ENCODE measurements at regions of chr20 and their contacts with region 1.

Region 1: DNA sequence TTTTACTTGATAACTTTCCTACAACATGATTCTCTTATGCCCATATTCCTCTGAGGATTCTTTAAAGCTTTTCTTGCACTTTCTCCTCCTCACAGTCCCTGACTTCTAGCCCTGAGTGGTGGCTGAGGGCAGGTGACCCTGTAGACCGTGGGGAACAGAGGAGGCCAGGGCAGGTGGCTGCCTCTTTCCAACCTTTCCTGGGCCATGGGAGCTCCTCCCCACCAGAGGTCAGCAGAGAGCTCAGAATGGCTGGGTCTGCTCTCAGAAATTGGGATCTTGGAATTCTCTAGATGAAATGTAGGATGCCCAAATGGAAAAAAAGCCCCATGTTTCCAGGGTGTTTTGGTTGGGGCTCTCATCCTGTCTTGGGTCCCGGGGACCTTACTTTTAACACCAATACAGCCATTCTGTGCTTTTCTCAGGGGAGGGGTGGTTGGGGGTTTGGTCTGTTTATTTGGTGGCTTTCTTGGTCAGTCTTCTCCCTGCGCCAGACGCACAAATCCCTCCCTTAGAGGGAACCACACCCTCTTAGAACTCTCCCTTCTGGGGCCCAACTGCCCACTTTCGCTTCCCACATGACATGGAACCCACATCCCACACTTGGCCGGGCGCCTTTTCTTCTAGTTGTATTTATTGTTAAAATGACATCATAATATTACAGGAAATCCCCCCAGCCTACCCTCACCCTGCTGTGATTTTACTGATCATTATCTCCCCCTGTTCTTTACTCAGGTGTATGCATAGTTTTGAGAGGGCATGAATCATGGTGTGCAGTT is 17.9 kb downstream of the GNAS start:
- DNase-seq: peak; percentile 65
- H3K4me3 ChIP-seq: no peak overlapping the region
- H3K27ac ChIP-seq: no peak overlapping the region
- H3K4me1 ChIP-seq: peaks cover 16% of the 10 kb centered on the region
- CTCF ChIP-seq: peak; percentile 95

Region 2: GRCh38 chr20:58778760-58779159 is 91.7 kb before region 1 on chr20:
- CTCF ChIA-PET with region 1: no interaction called
- POLR2A ChIA-PET with region 1: no interaction called
- intact Hi-C with region 1: no loop called
- DNase-seq: no peak
- H3K4me3 ChIP-seq: no peak overlapping the region
- H3K27ac ChIP-seq: no peak overlapping the region
- H3K4me1 ChIP-seq: no peaks in the 10 kb centered on the region
- CTCF ChIP-seq: no peak

Region 3: DNA sequence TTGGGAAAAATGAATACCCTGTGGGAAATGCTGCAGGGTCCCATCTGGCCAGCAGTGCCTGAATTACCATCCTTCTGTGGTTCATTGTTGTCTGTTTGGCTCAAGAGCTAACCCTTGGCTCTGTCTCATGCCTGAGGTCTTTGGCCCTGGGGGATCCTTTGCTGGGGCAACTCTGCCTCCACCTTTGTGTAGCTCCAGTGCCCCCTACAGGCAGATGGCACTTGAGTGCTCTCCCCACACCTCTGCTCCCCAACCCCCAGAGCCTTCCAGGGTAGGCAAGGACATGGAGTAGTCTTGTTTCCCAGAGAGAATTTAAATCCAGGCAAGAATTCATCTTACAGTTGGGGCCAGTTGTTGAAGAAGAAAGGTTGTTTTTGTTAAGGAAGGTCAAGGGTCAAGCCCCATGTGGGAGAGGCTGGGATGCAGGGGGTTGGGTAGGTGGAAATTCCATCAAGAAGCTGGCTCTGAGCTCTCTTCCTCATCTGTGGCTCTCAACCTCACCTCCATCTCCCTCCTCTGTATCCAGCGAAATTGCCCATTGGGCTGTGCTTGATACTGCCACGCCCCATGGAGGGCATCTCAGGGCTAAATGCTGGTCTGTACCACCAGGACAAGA is 337.4 kb after region 1 on chr20:
- CTCF ChIA-PET with region 1: interaction called, 3 read pairs
- POLR2A ChIA-PET with region 1: interaction called, 3 read pairs
- intact Hi-C with region 1: loop called (anchors 1 kb)
- DNase-seq: peak; percentile 86
- H3K4me3 ChIP-seq: no peak overlapping the region
- H3K27ac ChIP-seq: no peak overlapping the region
- H3K4me1 ChIP-seq: peaks cover 4% of the 10 kb centered on the region
- CTCF ChIP-seq: peak; percentile 95

Region 4: GRCh38 chr20:59403261-59403961 is 533.0 kb after region 1 on chr20:
- CTCF ChIA-PET with region 1: no interaction called
- POLR2A ChIA-PET with region 1: no interaction called
- intact Hi-C with region 1: loop called (anchors 5 kb)
- DNase-seq: peak; percentile 39
- H3K4me3 ChIP-seq: no peak overlapping the region
- H3K27ac ChIP-seq: no peak overlapping the region
- H3K4me1 ChIP-seq: no peaks in the 10 kb centered on the region
- CTCF ChIP-seq: peak; percentile 95

Measured in OCI-LY7 (cell line).